GM18951 (cell line): ENCODE measurements at regions of chr6 and their contacts with region 1.

Region 1: DNA sequence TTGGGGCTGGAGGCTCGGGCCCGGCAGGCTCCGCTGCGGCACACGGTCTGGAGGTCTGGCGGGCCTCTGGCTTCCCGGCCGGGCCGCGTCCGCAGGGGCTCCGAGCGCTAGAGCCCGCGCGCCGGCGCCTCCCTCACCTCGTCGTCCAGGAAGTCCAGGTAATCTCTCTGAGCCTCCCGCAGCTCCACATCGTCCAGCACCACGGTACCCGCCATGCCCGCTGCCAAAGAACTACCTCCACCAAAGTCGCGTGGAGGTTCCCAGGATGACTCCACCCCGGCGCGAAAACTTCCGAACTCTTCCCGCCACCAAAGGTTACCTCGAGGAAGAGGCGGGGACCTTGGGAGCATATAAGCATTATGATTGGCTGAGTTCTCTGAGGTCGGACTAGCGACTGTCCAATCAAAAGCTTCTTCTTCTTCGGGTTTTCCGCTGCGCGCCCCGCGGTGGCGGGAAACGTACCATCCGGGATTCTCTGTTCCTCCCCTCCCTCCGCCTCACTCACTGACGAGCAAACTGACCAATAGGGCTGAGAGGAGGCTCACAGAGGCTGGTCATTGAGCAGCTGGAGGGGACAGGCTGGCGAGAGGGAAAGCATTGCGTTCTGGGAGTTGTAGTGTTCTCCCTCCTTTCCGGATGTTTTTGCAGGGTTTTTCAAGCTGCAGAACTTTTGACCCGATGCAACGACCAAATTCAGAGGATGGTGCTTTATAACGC is at the start of gene MCM3:
- POLR2A ChIP-seq: peak; percentile 77

Region 2: GRCh38 chr6:52399511-52400312 is 115.1 kb after region 1 on chr6:
- in situ Hi-C with region 1: loop called (anchors 5 kb)
- POLR2A ChIP-seq: no peak